ENCODE measurements at regions of chr1 and their contacts with region 1.

Region 1: GRCh38 chr1:59198564-59198963 is 98.3 kb upstream of the FGGY start:
- H3K4me3 ChIP-seq: no peak overlapping the region
- H3K27ac ChIP-seq: no peak overlapping the region
- H3K4me1 ChIP-seq: peaks cover 13% of the 10 kb centered on the region; the same call in 1 of the 2 replicates
- CTCF ChIP-seq: no peak

Region 2: GRCh38 chr1:58884706-58885661 is 313.6 kb before region 1 on chr1:
- CTCF ChIA-PET with region 1: no interaction called
- POLR2A ChIA-PET with region 1: no interaction called
- H3K4me3 ChIP-seq: no peak overlapping the region
- H3K27ac ChIP-seq: peak overlapping the region; percentile 73
- H3K4me1 ChIP-seq: peaks cover 24% of the 10 kb centered on the region
- CTCF ChIP-seq: no peak

Region 3: GRCh38 chr1:59150577-59151391 is 47.8 kb before region 1 on chr1:
- CTCF ChIA-PET with region 1: no interaction called
- POLR2A ChIA-PET with region 1: no interaction called
- H3K4me3 ChIP-seq: no peak overlapping the region
- H3K27ac ChIP-seq: no peak overlapping the region
- H3K4me1 ChIP-seq: no peaks in the 10 kb centered on the region; the same call in 1 of the 2 replicates
- CTCF ChIP-seq: no peak

Region 4: DNA sequence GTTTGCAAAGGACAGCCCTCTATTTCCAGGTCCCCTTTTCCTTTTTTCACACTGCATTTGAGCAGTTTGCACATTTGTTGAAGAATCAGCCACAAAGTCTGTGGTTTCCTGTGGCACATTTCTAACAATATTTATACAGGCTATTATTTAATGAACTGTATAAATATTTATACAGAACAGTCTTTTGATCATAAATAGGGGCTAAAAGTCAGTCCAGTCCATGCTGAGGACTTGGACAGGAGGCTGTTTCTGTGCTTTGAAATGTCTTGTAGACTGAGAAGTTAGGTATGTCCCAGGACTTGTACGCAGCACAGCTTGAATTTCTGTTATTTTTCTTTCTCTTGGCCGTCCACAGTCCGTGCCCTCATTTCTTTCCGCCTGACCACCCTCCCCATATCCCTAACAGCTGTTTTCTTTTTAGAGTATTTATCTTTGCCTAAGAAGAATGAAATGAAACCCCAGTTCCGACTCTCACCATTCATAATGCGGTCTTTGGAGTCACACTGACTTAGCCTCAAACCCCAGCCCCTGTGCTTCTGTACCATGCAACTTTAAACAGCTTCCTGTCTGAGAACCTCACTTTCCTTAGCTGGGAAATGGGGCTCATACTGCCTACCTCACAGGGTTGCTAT is 118.0 kb after region 1 on chr1:
- CTCF ChIA-PET with region 1: no interaction called
- POLR2A ChIA-PET with region 1: no interaction called
- H3K4me3 ChIP-seq: no peak overlapping the region
- H3K27ac ChIP-seq: no peak overlapping the region
- H3K4me1 ChIP-seq: peaks cover 3% of the 10 kb centered on the region; the same call in 1 of the 2 replicates
- CTCF ChIP-seq: no peak

Region 5: DNA sequence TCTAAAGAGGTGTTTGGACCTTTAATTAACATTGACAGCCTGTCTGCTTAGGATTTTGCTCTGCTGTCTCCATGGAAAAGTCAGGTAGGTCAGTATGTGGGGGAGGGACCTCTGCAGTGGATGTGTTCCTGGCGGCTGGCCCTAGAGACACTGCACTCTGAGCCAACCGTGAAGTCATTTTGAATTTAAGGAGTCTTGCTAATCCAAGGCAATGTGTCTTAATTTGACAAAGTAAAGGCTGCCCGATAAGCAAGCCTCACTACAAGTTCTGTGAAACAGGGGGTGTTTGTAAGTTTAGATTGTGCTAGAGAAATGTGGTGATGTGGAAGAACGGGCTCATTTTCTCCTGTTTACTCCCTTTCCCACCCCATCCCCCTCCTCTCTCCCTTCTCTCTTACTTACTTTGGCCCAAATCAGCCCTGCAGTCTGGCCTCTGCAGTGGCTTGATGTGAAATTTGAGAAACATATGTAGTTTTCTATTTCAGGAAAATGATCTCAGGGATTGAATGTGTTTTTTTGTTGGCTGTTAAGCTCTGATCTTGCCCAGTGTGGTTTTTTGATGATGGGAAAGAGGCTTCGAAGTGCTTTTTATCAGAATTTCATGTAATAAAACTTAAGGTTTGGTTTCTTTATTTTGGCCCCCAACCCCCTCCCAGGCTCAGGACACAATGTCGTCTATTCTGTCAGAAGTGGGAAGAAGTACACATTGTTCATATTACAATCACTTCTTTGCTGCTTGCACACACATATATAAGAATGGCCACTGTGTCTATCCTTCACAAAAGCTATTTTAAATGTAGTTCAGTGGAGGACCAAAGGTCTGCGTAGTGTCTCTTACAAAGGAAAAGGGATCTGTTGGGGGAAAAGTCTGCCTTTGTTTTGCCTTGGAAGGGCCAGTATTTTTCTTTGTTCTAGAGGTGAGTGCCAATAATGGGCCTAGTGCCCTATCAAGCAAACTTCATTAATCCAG is 194.9 kb after region 1 on chr1:
- CTCF ChIA-PET with region 1: no interaction called
- POLR2A ChIA-PET with region 1: interaction called, 10 read pairs
- H3K4me3 ChIP-seq: no peak overlapping the region
- H3K27ac ChIP-seq: peak overlapping the region; percentile 89
- H3K4me1 ChIP-seq: peaks cover 26% of the 10 kb centered on the region
- CTCF ChIP-seq: no peak

Measured in HEK293 (cell line).